Heart left ventricle (tissue), 16 donors: ENCODE measurements at regions of chr6 and their contacts with region 1.

Region 1: GRCh38 chr6:5030596-5031136 is 26.8 kb upstream of the RPP40 start:
- DNase-seq: peak; percentile 70 to 83 (median 75)
- ATAC-seq: peak in 3 of 4 donors; percentile 72 to 75 (median 72)
- H3K4me3 ChIP-seq: no peak overlapping the region
- H3K27ac ChIP-seq: no peak overlapping the region
- H3K4me1 ChIP-seq: peaks cover 0 to 24% (median 2%) of the 10 kb centered on the region in 12 donors
- H3K27me3 ChIP-seq: no peaks in the 10 kb centered on the region
- CTCF ChIP-seq: peak; percentile 39 to 76 (median 60)
- POLR2A ChIP-seq: no peak

Region 2: GRCh38 chr6:5003604-5004372 is 26.9 kb before region 1 on chr6 and contains the start of gene RPP40:
- intact Hi-C with region 1: loop called in 1 of 10 experiments (anchors 2 kb)
- DNase-seq: peak; percentile 97 to 99 (median 97)
- ATAC-seq: peak; percentile 98 to 100 (median 100)
- H3K4me3 ChIP-seq: peak within 1 kb of the TSS; percentile 34 to 90 (median 70)
- H3K27ac ChIP-seq: peak within 1 kb of the TSS; percentile 60 to 96 (median 89)
- H3K4me1 ChIP-seq: peaks cover 0 to 8% (median 5%) of the 10 kb centered on the region in 12 donors
- H3K27me3 ChIP-seq: no peaks in the 10 kb centered on the region
- CTCF ChIP-seq: peak; percentile 77 to 96 (median 88)
- POLR2A ChIP-seq: peak in 1 of 2 donors; percentile 28
- total RNA-seq, gene RPP40: 1.8 to 7.0 (median 3.5) TPM